Activated naive CD4-positive, alpha-beta T cell treated with anti-CD3 and anti-CD28 coated beads for 36 hours (primary cell): ENCODE measurements at regions of chr15 and their contacts with region 1.

Region 1: GRCh38 chr15:93527374-93528050 is 438.5 kb upstream of the RGMA start:
- DNase-seq: no peak
- H3K4me3 Mint-ChIP-seq: no peak overlapping the region
- H3K27ac Mint-ChIP-seq: no peak overlapping the region
- H3K4me1 Mint-ChIP-seq: no peaks in the 10 kb centered on the region
- H3K27me3 Mint-ChIP-seq: peaks cover 2% of the 10 kb centered on the region

Region 2: GRCh38 chr15:93479715-93480114 is 47.8 kb before region 1 on chr15:
- CTCF ChIA-PET with region 1: no interaction called
- intact Hi-C with region 1: loop called (anchors 5 kb)
- DNase-seq: no peak
- H3K4me3 Mint-ChIP-seq: no peak overlapping the region
- H3K27ac Mint-ChIP-seq: no peak overlapping the region
- H3K4me1 Mint-ChIP-seq: no peaks in the 10 kb centered on the region
- H3K27me3 Mint-ChIP-seq: peaks cover 2% of the 10 kb centered on the region

Region 3: DNA sequence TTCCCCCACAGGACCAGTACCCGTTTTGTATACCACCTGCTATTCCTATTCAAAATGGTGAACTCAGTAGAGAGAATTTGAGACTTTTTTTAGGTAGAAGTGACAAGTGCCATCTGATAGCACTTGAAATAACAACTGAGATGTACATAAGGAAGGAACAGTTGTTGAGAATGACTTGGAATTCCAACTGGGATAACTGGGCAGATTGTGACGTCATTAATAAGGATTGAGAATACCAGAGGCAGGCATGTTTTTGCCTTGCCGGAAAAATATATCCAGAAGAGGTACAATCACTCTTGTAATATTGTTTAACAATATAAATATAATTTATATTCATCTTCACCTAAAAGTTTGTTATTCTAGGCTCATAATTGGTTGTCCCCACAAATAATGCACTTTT is 15.6 kb after region 1 on chr15:
- CTCF ChIA-PET with region 1: no interaction called
- intact Hi-C with region 1: no loop called
- DNase-seq: no peak
- H3K4me3 Mint-ChIP-seq: no peak overlapping the region
- H3K27ac Mint-ChIP-seq: no peak overlapping the region
- H3K4me1 Mint-ChIP-seq: no peaks in the 10 kb centered on the region
- H3K27me3 Mint-ChIP-seq: no peaks in the 10 kb centered on the region